AG04450 (cell line): ENCODE measurements at regions of chr2 and their contacts with region 1.

Region 1: GRCh38 chr2:120693121-120693520 is 42.5 kb upstream of the GLI2 start:
- DNase-seq: no peak
- H3K4me3 ChIP-seq: no peak overlapping the region
- H3K27ac ChIP-seq: no peak overlapping the region
- H3K27me3 ChIP-seq: peaks cover 11% of the 10 kb centered on the region
- CTCF ChIP-seq: no peak

Region 2: GRCh38 chr2:120879431-120880295 is 186.5 kb after region 1 on chr2:
- CTCF ChIA-PET with region 1: interaction called, 11 read pairs
- POLR2A ChIA-PET with region 1: no interaction called
- DNase-seq: no peak
- H3K4me3 ChIP-seq: no peak overlapping the region
- H3K27ac ChIP-seq: no peak overlapping the region
- H3K27me3 ChIP-seq: no peaks in the 10 kb centered on the region
- CTCF ChIP-seq: 0 out of 2 replicates have a peak, but pooled peaks have one; percentile 2

Region 3: DNA sequence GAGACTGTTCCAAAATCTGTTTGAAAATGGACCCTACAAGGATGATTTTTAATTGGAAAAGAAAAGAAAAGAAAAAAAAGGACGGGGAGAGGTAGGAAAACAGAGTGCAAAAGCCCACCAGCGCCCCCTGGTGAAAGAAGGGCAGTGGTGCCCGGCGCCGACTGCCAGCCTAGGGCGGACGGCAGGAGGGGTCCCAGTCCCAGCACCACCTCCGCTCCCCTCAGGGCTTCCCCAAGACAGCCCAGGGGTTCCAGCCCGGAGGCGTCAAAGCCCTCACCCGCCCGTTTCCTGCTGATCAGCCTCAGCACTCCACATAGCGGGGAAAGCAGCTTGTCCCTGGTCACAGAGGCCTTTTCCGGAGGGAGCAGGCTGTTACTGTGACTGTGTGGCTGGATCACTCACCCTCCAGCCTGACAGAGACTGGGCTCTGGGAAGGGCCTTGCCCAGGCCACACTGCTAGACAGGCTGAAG is 377.9 kb after region 1 on chr2:
- CTCF ChIA-PET with region 1: interaction called, 223 read pairs
- POLR2A ChIA-PET with region 1: interaction called, 4 read pairs
- DNase-seq: no peak
- H3K4me3 ChIP-seq: no peak overlapping the region
- H3K27ac ChIP-seq: no peak overlapping the region
- H3K27me3 ChIP-seq: peaks cover 34% of the 10 kb centered on the region
- CTCF ChIP-seq: peak; percentile 95